Activated B cell treated with CpG ODN at 0.5 μM for 24 hours (primary cell): ENCODE measurements at regions of chr12 and their contacts with region 1.

Region 1: GRCh38 chr12:49866859-49867579 is 24.1 kb upstream of the BCDIN3D start:
- DNase-seq: peak; percentile 67
- ATAC-seq: peak; percentile 90
- H3K4me3 Mint-ChIP-seq: no peak overlapping the region
- H3K27ac Mint-ChIP-seq: no peak overlapping the region
- H3K4me1 Mint-ChIP-seq: no peaks in the 10 kb centered on the region
- H3K27me3 Mint-ChIP-seq: peaks cover 6% of the 10 kb centered on the region
- CTCF ChIP-seq: no peak

Region 2: DNA sequence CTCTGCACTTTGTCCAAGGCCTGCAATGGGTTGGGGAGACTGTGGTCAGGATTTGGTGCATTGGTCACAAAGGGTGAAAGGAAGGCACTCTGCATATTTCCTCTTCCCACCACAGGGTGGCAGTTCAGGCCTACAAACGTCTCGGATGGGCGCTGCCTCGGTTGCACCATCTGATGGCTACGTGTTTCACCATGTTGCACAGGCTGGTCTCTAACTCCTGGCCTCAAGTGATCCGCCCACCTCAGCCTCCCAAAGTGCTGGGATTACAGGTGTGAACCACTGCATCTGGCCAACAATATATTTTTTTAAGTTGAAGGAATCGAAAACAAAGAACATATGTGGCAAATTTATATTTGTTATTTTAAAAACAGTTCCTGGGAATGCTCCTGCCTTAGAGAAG is 90.6 kb before region 1 on chr12:
- CTCF ChIA-PET with region 1: no interaction called
- POLR2A ChIA-PET with region 1: no interaction called
- intact Hi-C with region 1: loop called (anchors 1 kb)
- DNase-seq: no peak
- ATAC-seq: peak; percentile 85
- H3K4me3 Mint-ChIP-seq: no peak overlapping the region
- H3K27ac Mint-ChIP-seq: no peak overlapping the region
- H3K4me1 Mint-ChIP-seq: peaks cover 13% of the 10 kb centered on the region
- H3K27me3 Mint-ChIP-seq: peaks cover 17% of the 10 kb centered on the region
- CTCF ChIP-seq: no peak

Region 3: GRCh38 chr12:49945394-49946080 is 78.5 kb after region 1 on chr12:
- CTCF ChIA-PET with region 1: interaction called, 11 read pairs
- POLR2A ChIA-PET with region 1: no interaction called
- intact Hi-C with region 1: no loop called
- DNase-seq: peak; percentile 67
- ATAC-seq: peak; percentile 99
- H3K4me3 Mint-ChIP-seq: peak overlapping the region; percentile 77
- H3K27ac Mint-ChIP-seq: no peak overlapping the region
- H3K4me1 Mint-ChIP-seq: peaks cover 14% of the 10 kb centered on the region
- H3K27me3 Mint-ChIP-seq: peaks cover 6% of the 10 kb centered on the region
- CTCF ChIP-seq: peak; percentile 65

Region 4: DNA sequence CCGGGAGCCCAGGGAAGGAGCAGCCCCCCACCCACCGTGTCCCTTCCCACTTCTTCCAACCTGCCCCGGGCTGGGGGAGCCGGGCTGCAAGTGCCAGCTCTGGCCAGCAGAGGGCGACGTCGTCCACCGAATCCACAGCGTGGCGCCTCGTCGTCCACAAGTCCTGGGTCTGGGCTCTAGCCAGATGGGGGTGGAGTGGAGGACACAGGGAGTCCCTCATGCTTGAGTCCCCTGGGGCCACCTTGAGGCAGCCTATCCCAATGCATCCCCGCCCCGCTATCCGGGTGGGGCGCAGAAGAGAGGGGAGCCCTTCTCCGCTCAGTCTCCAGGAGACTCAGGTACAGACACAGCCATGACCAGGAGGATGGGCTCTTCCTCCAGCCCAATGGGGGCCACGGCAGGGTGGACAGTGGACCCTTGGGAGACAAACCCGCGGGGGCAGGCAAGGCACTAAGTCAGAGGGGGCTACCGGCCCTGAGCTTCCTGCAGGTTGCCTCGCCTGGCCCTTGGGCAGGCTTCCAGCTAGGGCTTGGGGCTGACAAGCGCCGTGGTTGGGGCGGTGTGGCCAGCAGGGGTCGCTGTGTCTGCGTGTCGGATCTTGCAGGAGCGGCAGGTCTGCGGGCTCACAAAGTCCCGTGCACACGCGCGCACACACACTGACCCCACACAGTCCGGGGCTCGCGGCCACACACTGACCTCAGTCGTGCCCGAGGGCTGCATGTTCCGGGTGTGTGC is 100.2 kb after region 1 on chr12:
- CTCF ChIA-PET with region 1: interaction called, 3 read pairs
- POLR2A ChIA-PET with region 1: no interaction called
- intact Hi-C with region 1: loop called (anchors 5 kb)
- DNase-seq: peak; percentile 86
- ATAC-seq: peak; percentile 89
- H3K4me3 Mint-ChIP-seq: peak overlapping the region; percentile 71
- H3K27ac Mint-ChIP-seq: no peak overlapping the region
- H3K4me1 Mint-ChIP-seq: peaks cover 4% of the 10 kb centered on the region
- H3K27me3 Mint-ChIP-seq: peaks cover 39% of the 10 kb centered on the region
- CTCF ChIP-seq: peak; percentile 51